ENCODE measurements at regions of chr7 and their contacts with region 1.

Region 1: GRCh38 chr7:105678811-105679495 is 97.7 kb upstream of the EFCAB10 start:
- DNase-seq: peak; percentile 56 to 65
- ATAC-seq: peak; percentile 69 to 93 (median 86)
- H3K4me3 ChIP-seq: peak overlapping the region in 9 of 10 donors; percentile 21 to 58 (median 41)
- H3K27ac ChIP-seq: peak overlapping the region in 8 of 10 donors; percentile 18 to 87 (median 44)
- H3K4me1 ChIP-seq: peaks cover 0 to 79% (median 42%) of the 10 kb centered on the region in 9 donors
- H3K27me3 ChIP-seq: no peaks in the 10 kb centered on the region
- CTCF ChIP-seq: no peak

Region 2: DNA sequence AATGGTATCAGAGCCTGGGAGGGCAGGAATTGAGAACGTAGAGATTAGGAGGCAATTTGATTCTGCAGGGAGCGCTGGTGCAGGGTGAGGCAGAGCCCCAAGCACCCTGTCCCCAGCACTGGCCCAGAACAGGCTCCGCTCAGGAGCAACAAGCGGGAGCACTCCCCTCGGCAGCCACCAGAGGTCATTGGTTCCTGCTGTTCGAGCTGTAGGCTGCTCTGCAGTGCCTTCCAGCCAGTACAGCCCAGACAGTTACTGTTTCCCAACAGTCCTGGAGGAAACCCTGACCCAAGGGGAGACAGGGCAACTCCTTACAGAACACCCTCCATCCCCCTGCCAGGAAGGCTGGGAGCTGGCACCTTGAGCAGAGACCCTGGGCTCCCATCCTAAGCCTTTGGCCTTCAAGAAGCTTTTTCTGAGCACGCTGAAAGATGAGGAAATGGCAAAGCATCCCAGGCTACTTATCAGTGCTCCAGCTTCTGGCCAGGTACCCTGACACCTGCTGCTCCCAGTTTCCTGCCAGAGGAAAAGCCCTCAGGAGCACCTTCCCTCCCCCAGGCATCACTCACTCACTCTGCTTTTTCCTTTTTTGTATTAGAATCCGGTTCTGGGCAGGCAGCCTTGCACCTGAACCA is 26.5 kb before region 1 on chr7:
- intact Hi-C with region 1: no loop called
- DNase-seq: peak; percentile 75 to 79
- ATAC-seq: peak; percentile 86 to 95 (median 90)
- H3K4me3 ChIP-seq: no peak overlapping the region
- H3K27ac ChIP-seq: no peak overlapping the region
- H3K4me1 ChIP-seq: peaks cover 0 to 40% (median 23%) of the 10 kb centered on the region in 9 donors
- H3K27me3 ChIP-seq: no peaks in the 10 kb centered on the region
- CTCF ChIP-seq: peak; percentile 70 to 94 (median 92)

Region 3: DNA sequence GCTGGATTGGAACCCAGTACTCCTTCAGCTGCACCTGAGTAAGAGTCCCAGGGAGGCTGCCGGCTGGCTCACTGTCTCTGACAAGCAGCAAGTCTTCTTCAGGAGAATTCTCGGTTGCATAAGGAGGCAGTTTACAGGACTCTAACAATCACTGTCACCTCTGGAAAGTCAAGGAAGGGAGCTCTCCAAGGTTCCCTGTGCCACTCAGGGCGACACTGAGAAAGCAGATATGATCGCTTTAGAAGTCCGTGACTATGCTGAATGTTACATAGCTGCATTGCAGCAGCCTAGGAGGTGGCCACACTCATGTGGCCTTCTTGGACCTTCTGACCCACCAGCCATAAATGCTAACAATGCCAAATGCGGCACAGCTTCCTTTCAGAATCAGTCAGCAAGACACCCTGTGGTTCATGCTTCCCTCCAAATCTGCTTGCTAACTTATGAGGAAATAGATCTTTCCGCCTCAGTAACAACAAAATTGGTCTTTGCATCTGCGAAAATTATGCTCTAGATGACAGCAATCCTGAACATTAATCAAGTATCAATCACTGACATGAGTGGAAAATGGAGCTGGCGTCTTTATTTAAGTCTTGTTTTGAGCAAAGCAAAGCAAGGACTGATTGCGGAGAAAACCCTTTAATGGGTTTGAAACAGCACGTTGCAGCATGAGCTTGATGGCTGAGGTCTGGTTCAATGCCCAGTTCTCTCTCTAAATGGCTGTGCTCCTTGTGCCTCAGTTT is 64.6 kb after region 1 on chr7:
- intact Hi-C with region 1: loop called in 1 of 10 experiments (anchors 10 kb)
- DNase-seq: no peak
- ATAC-seq: peak in 2 of 8 donors; percentile 17 to 22
- H3K4me3 ChIP-seq: no peak overlapping the region
- H3K27ac ChIP-seq: no peak overlapping the region
- H3K4me1 ChIP-seq: peaks cover 0 to 13% (median 0%) of the 10 kb centered on the region in 9 donors
- H3K27me3 ChIP-seq: no peaks in the 10 kb centered on the region
- CTCF ChIP-seq: no peak

Measured in heart right ventricle (tissue), 16 donors.